ENCODE measurements at regions of chr1 and their contacts with region 1.

Region 1: DNA sequence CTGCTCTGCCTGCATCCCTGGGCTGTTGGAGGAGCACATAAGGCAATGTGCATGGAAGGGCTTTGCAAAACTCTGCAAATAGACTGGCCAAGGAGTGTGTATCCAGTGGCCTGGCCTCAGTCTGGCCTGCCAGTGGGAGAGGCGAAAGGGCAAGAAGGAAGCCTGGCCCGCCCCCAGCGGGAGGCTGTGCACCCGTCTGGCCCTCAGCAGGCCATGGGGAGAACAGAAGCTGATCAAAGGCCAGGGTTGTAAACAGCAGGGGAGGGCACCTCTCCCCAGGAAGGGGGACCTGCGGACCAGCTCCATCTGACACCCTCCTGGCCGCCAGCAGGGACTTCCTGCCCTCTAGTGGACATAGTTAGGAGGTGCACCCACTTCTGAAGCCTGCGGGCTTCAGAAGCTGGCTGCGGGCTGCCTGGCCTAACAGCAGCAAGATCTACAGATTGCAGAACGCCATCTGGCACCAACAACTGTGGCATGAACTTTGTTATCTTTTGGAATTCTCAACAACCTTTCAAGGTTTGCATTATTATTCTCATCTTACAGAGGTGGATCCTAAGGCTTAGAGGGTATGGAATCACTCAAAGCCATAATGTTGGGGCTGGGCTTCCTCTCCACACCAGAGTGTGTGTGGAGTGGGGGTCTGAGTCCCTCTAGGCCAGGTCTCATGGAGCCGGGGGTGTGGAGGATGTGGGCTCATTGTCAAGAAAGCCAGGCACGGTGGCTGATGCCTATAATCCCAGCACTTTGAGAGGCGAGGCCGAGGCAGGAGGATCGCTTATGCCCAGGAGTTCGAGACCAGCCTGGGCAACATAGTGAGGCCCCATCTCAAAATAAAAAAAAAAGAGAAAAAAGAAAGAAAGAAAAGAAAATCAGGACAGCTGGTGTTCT is 18.9 kb upstream of the CDK18 start:
- DNase-seq: peak; percentile 70 to 72 (median 71)
- H3K4me3 ChIP-seq: no peak overlapping the region
- H3K4me3 Mint-ChIP-seq: peak overlapping the region in 1 of 8 donors; percentile 13
- H3K27ac ChIP-seq: no peak overlapping the region
- H3K27ac Mint-ChIP-seq: peak overlapping the region in 3 of 7 donors; percentile 23 to 78 (median 73)
- H3K4me1 ChIP-seq: peaks cover 17% of the 10 kb centered on the region
- H3K4me1 Mint-ChIP-seq: peaks cover 16 to 46% (median 25%) of the 10 kb centered on the region in 4 donors
- H3K27me3 ChIP-seq: peaks cover 3% of the 10 kb centered on the region
- H3K27me3 Mint-ChIP-seq: peaks cover 26 to 28% of the 10 kb centered on the region in 2 donors

Region 2: GRCh38 chr1:205248793-205249601 is 236.6 kb before region 1 on chr1:
- CTCF ChIA-PET with region 1: no interaction called
- POLR2A ChIA-PET with region 1: no interaction called
- intact Hi-C with region 1: no loop called
- DNase-seq: no peak
- H3K4me3 ChIP-seq: no peak overlapping the region
- H3K4me3 Mint-ChIP-seq: no peak overlapping the region
- H3K27ac ChIP-seq: no peak overlapping the region
- H3K27ac Mint-ChIP-seq: peak overlapping the region in 2 of 7 donors; percentile 22 to 25
- H3K4me1 ChIP-seq: no peaks in the 10 kb centered on the region
- H3K4me1 Mint-ChIP-seq: no peaks in the 10 kb centered on the region
- H3K27me3 ChIP-seq: no peaks in the 10 kb centered on the region
- H3K27me3 Mint-ChIP-seq: no peaks in the 10 kb centered on the region

Region 3: DNA sequence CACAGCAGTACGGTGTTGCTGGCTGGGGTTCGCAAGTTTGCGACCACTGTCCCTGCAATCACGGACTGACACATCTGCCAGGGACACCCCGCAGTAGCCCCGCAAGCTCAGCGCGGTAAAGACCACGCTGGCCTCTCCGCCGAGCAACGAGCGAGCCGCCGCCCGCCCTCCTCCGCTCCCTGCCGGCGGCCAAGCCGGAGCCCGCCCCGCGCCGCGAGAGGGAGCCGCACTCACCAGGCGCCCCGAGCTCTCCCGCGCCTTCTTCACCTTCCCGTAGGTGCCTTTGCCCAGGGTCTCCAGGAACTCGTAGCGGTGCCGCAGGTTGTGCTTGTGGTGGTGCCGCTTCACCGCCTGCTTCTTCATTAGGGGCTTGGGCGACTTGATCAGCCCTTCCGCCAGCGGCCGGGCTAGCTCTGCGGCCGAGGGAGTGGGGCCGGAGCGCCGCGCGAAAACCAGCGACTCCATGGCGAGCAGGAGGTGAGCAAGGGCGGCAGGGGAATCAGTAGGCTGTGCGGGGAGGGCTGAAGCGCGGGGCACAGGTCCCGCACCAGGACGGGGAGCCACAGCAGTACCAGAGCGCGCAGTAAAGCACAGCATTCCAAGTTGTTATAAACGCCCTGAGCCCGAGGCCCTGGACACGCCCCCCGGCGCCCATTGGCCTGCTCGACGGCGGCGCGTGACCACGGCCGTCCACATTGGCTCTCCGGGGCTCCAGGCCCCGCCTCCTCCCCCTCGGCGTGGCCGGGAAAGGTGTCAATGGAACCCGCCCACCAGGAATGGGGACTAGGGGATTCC is 164.2 kb before region 1 on chr1 and contains the start of gene NUAK2:
- CTCF ChIA-PET with region 1: interaction called, 20 read pairs
- POLR2A ChIA-PET with region 1: no interaction called
- intact Hi-C with region 1: no loop called
- DNase-seq: peak; percentile 80 to 83 (median 81)
- H3K4me3 ChIP-seq: peak within 1 kb of the TSS; percentile 79 to 99
- H3K4me3 Mint-ChIP-seq: peak within 1 kb of the TSS; percentile 95 to 100 (median 98)
- H3K27ac ChIP-seq: peak within 1 kb of the TSS; percentile 74
- H3K27ac Mint-ChIP-seq: peak within 1 kb of the TSS; percentile 83 to 97 (median 90)
- H3K4me1 ChIP-seq: peaks cover 56% of the 10 kb centered on the region
- H3K4me1 Mint-ChIP-seq: peaks cover 49 to 80% (median 68%) of the 10 kb centered on the region in 4 donors
- H3K27me3 ChIP-seq: no peaks in the 10 kb centered on the region
- H3K27me3 Mint-ChIP-seq: no peaks in the 10 kb centered on the region
- total RNA-seq, gene NUAK2: 32.5 to 32.8 TPM

Region 4: GRCh38 chr1:205354259-205354904 is 131.2 kb before region 1 on chr1:
- CTCF ChIA-PET with region 1: interaction called, 96 read pairs
- POLR2A ChIA-PET with region 1: interaction called, 10 read pairs
- intact Hi-C with region 1: loop called (anchors 1 kb)
- DNase-seq: peak; percentile 57 to 70 (median 62)
- H3K4me3 ChIP-seq: no peak overlapping the region
- H3K4me3 Mint-ChIP-seq: no peak overlapping the region
- H3K27ac ChIP-seq: no peak overlapping the region
- H3K27ac Mint-ChIP-seq: no peak overlapping the region
- H3K4me1 ChIP-seq: no peaks in the 10 kb centered on the region
- H3K4me1 Mint-ChIP-seq: no peaks in the 10 kb centered on the region
- H3K27me3 ChIP-seq: peaks cover 4% of the 10 kb centered on the region
- H3K27me3 Mint-ChIP-seq: peaks cover 12 to 16% of the 10 kb centered on the region in 2 donors

Region 5: GRCh38 chr1:205391386-205391785 is 94.2 kb before region 1 on chr1:
- CTCF ChIA-PET with region 1: interaction called, 152 read pairs
- POLR2A ChIA-PET with region 1: interaction called, 15 read pairs
- intact Hi-C with region 1: no loop called
- DNase-seq: no peak
- H3K4me3 ChIP-seq: no peak overlapping the region
- H3K4me3 Mint-ChIP-seq: no peak overlapping the region
- H3K27ac ChIP-seq: no peak overlapping the region
- H3K27ac Mint-ChIP-seq: no peak overlapping the region
- H3K4me1 ChIP-seq: no peaks in the 10 kb centered on the region
- H3K4me1 Mint-ChIP-seq: no peaks in the 10 kb centered on the region
- H3K27me3 ChIP-seq: peaks cover 6% of the 10 kb centered on the region
- H3K27me3 Mint-ChIP-seq: peaks cover 6 to 19% of the 10 kb centered on the region in 2 donors

Region 6: GRCh38 chr1:205424901-205425600 is 60.5 kb before region 1 on chr1:
- CTCF ChIA-PET with region 1: interaction called, 21 read pairs
- POLR2A ChIA-PET with region 1: interaction called, 3 read pairs
- intact Hi-C with region 1: no loop called
- DNase-seq: no peak
- H3K4me3 ChIP-seq: no peak overlapping the region
- H3K4me3 Mint-ChIP-seq: no peak overlapping the region
- H3K27ac ChIP-seq: no peak overlapping the region
- H3K27ac Mint-ChIP-seq: no peak overlapping the region
- H3K4me1 ChIP-seq: no peaks in the 10 kb centered on the region
- H3K4me1 Mint-ChIP-seq: peaks cover 0 to 5% (median 3%) of the 10 kb centered on the region in 4 donors
- H3K27me3 ChIP-seq: no peaks in the 10 kb centered on the region
- H3K27me3 Mint-ChIP-seq: peaks cover 7 to 20% of the 10 kb centered on the region in 2 donors

Region 7: GRCh38 chr1:205440476-205441317 is 44.9 kb before region 1 on chr1:
- CTCF ChIA-PET with region 1: interaction called, 19 read pairs
- POLR2A ChIA-PET with region 1: interaction called, 14 read pairs
- intact Hi-C with region 1: loop called (anchors 5 kb)
- DNase-seq: peak; percentile 49 to 81 (median 60)
- H3K4me3 ChIP-seq: peak overlapping the region; percentile 20 to 64
- H3K4me3 Mint-ChIP-seq: peak overlapping the region; percentile 76 to 93 (median 88)
- H3K27ac ChIP-seq: peak overlapping the region; percentile 65
- H3K27ac Mint-ChIP-seq: peak overlapping the region; percentile 78 to 94 (median 91)
- H3K4me1 ChIP-seq: peaks cover 28% of the 10 kb centered on the region
- H3K4me1 Mint-ChIP-seq: peaks cover 23 to 34% (median 26%) of the 10 kb centered on the region in 4 donors
- H3K27me3 ChIP-seq: no peaks in the 10 kb centered on the region
- H3K27me3 Mint-ChIP-seq: peaks cover 0 to 4% of the 10 kb centered on the region in 2 donors

Region 8: GRCh38 chr1:205523891-205524793 is 38.6 kb after region 1 on chr1:
- CTCF ChIA-PET with region 1: interaction called, 208 read pairs
- POLR2A ChIA-PET with region 1: interaction called, 6 read pairs
- intact Hi-C with region 1: loop called (anchors 1 kb)
- DNase-seq: peak in 4 of 5 donors; percentile 61 to 64 (median 63)
- H3K4me3 ChIP-seq: no peak overlapping the region
- H3K4me3 Mint-ChIP-seq: no peak overlapping the region
- H3K27ac ChIP-seq: no peak overlapping the region
- H3K27ac Mint-ChIP-seq: no peak overlapping the region
- H3K4me1 ChIP-seq: no peaks in the 10 kb centered on the region
- H3K4me1 Mint-ChIP-seq: no peaks in the 10 kb centered on the region
- H3K27me3 ChIP-seq: no peaks in the 10 kb centered on the region
- H3K27me3 Mint-ChIP-seq: peaks cover 0 to 3% of the 10 kb centered on the region in 2 donors

Measured in CD4-positive, alpha-beta memory T cell (primary cell).